Activated naive CD4-positive, alpha-beta T cell treated with anti-CD3 and anti-CD28 coated beads for 36 hours (primary cell): ENCODE measurements at regions of chr20 and their contacts with region 1.

Region 1: DNA sequence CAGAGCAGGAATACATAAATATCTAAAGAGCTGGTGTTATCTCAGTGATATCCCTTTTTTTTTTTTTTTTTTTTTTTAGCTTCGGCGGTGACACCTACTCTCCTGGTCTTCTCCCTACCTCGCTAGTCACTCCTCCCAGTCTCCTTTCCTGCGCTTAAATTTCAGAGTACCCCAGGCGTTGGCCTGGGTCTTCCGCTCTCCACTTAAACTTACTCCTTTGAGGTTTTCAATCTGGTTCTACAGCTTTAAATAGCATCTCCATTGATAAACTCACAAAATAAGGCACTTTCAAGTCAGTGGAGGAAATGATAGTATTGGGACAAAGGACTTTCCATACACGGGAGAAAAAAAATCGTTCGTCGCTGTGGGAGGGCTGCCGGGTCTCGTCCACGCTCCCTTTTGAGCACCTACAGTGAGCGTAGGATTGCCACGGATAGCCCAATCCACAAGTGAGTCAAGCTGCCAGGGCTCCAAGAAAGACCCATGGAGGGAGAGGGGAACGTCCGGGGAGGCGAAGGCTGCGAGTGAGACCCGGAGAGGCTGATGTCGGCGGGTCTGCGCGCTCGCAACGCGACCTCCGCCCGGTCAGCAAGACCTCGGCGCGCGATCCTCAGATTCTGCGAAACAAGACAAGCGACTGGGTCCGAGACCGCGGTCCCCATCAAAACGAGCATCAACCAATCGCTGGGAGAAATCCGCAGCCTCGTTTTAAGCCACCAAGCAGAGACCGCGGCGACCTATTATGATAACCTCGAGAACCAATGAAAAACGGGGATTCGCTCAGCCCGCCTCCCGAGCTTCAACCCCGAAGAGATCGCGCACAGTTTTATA is 672 bp upstream of the SRSF6 start:
- DNase-seq: peak; percentile 92
- H3K4me3 Mint-ChIP-seq: peak overlapping the region; percentile 81
- H3K27ac Mint-ChIP-seq: peak overlapping the region; percentile 95
- H3K4me1 Mint-ChIP-seq: peaks cover 28% of the 10 kb centered on the region
- H3K27me3 Mint-ChIP-seq: peaks cover 5% of the 10 kb centered on the region

Region 2: DNA sequence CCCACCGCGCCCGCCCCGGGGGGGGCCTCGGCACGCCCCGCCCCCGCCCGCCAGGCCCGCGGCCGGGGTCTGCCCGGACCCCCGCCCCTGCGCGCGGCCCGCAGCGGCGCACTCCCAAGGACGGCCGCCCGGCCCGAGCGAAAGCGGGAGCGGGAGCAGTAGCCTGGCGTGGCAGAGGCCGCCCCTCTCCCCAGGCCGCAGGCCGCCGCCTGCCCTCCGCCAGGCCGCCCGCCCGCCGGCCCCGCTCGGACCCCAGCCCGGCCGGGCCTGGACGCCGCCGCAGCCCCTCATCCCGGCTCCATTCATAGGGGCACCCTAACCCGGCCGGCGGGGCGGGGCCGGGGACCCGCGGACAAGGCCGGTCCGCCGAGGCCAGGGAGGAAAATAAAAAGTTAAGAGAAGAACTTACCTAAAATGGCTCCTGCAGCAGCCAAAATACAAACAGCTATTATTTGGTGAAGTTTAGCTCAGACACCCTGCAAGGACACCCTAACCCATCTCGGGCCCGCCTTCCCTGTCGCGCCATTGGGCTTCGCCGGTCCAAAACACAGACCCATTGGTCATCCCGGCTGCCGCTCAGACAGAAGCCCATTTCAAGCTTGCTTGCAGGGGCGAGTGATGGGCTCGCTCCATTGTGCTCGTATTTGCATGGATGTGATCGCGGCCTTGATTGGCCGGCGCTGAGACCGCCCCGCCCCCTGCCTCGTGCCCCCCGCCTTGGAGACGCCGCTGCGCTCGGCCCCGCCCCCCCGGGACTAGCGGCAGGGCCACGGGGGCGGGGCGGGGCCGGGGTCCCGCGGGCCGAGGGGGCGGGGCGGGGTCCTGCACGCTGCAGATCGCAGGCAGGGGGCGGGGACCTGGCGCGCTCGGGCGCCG is 1838.9 kb before region 1 on chr20 and contains the start of gene CHD6:
- CTCF ChIA-PET with region 1: no interaction called
- intact Hi-C with region 1: loop called (anchors 5 kb)
- DNase-seq: peak; percentile 100
- H3K4me3 Mint-ChIP-seq: peak within 1 kb of the TSS; percentile 85
- H3K27ac Mint-ChIP-seq: peak within 1 kb of the TSS; percentile 68
- H3K4me1 Mint-ChIP-seq: peaks cover 39% of the 10 kb centered on the region
- H3K27me3 Mint-ChIP-seq: no peaks in the 10 kb centered on the region
- total RNA-seq, gene CHD6: 30.1 to 31.8 TPM

Region 3: GRCh38 chr20:43492101-43492500 is 35.1 kb after region 1 on chr20:
- CTCF ChIA-PET with region 1: no interaction called
- intact Hi-C with region 1: loop called (anchors 5 kb)
- DNase-seq: no peak
- H3K4me3 Mint-ChIP-seq: no peak overlapping the region
- H3K27ac Mint-ChIP-seq: no peak overlapping the region
- H3K4me1 Mint-ChIP-seq: peaks cover 4% of the 10 kb centered on the region
- H3K27me3 Mint-ChIP-seq: no peaks in the 10 kb centered on the region

Region 4: GRCh38 chr20:43579861-43580793 is 123.1 kb after region 1 on chr20:
- CTCF ChIA-PET with region 1: no interaction called
- intact Hi-C with region 1: no loop called
- DNase-seq: no peak
- H3K4me3 Mint-ChIP-seq: no peak overlapping the region
- H3K27ac Mint-ChIP-seq: no peak overlapping the region
- H3K4me1 Mint-ChIP-seq: no peaks in the 10 kb centered on the region
- H3K27me3 Mint-ChIP-seq: no peaks in the 10 kb centered on the region

Region 5: DNA sequence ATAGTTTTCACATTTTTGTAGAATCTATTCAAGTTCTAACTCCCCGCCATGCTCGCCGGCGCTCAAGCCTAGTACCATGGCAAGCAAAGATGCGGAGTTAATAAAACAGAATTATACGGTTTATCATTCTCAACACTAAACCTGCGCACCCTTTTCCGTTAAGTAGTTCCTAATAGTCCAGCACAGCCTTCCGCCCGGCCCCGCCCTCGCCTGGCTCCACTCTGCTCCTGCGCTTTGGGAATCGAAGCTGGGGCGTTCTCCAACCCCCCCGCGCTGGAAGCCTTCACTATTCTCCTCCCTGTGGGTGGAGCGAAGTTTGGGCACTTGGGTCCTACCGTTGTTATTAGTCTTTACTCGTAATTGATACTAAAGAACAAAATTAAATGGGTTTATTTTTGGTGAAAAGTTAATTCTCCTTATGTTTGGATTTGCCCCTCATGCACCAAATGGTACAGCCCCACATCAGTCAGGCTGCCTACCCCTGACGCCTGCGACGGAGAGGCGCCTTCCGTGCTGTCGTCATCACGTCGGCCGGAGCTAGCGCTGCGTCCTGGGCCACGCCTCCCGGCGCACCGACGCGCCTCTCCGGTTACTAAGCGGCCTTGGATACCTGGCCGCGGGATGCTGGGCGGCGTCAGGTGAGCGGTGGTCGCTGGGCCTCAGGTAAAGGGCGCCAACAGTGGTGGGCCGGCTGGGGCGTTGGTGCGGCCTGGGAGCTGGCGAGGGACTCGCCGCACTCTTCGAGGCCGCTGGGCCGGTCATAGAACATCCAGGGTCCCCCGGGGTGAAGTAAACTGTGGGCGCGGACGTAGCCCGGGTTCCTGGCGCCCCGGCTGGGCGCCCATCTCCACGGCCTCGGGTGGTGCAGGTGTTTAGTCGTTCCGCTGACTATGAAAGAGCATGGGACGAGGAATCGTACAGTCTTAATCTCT is 133.6 kb after region 1 on chr20 and contains the start of gene IFT52:
- CTCF ChIA-PET with region 1: no interaction called
- intact Hi-C with region 1: loop called (anchors 1 kb)
- DNase-seq: peak; percentile 91
- H3K4me3 Mint-ChIP-seq: peak within 1 kb of the TSS; percentile 82
- H3K27ac Mint-ChIP-seq: peak within 1 kb of the TSS; percentile 93
- H3K4me1 Mint-ChIP-seq: peaks cover 13% of the 10 kb centered on the region
- H3K27me3 Mint-ChIP-seq: no peaks in the 10 kb centered on the region
- total RNA-seq, gene IFT52: 14.2 to 15.8 TPM

Region 6: DNA sequence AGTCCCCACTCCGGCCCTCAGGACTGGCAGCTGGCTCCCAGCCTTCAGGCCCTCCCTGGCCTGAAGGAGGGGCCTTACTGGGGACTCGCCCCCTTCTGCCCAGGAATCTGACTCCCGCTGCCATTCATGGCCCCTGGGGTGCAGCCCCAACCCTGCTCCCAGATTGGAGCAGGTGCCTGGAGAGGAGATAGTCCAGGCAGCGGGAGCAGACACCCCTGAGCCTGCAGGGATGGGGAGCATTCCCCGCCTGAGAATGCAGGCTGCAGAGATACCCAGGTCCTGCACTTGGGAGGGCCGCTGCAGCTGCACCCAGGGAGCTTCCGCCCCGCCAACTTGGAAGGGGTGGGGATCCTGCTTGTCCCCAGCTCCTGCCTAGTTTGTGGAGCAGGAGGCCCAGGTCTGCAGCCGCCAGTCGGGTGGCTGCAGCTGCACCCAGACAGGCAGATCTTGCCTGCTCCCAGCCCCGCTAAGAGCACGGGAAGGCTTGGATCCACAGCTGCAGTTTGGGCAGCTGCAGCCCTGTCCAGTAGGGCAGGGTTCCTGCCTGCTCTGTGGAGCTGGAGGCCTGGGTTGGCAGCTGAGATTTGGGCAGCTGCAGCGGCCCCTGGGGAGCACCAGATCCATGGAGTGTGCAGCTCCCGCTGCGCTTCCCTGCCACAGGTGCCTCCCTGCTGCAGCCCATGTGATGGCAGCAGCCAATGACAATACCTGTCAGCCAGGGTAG is 264.6 kb after region 1 on chr20:
- CTCF ChIA-PET with region 1: no interaction called
- intact Hi-C with region 1: loop called (anchors 5 kb)
- DNase-seq: no peak
- H3K4me3 Mint-ChIP-seq: peak overlapping the region; percentile 72
- H3K27ac Mint-ChIP-seq: peak overlapping the region; percentile 60
- H3K4me1 Mint-ChIP-seq: peaks cover 59% of the 10 kb centered on the region
- H3K27me3 Mint-ChIP-seq: no peaks in the 10 kb centered on the region

Region 7: GRCh38 chr20:43955062-43955749 is 498.2 kb after region 1 on chr20:
- CTCF ChIA-PET with region 1: no interaction called
- intact Hi-C with region 1: loop called (anchors 5 kb)
- DNase-seq: peak; percentile 76
- H3K4me3 Mint-ChIP-seq: no peak overlapping the region
- H3K27ac Mint-ChIP-seq: peak overlapping the region; percentile 62
- H3K4me1 Mint-ChIP-seq: peaks cover 72% of the 10 kb centered on the region
- H3K27me3 Mint-ChIP-seq: peaks cover 9% of the 10 kb centered on the region

Region 8: GRCh38 chr20:44885392-44886265 is 1428.6 kb after region 1 on chr20 and contains the start of gene YWHAB:
- CTCF ChIA-PET with region 1: no interaction called
- intact Hi-C with region 1: loop called (anchors 10 kb)
- DNase-seq: peak; percentile 99
- H3K4me3 Mint-ChIP-seq: peak within 1 kb of the TSS; percentile 95
- H3K27ac Mint-ChIP-seq: peak within 1 kb of the TSS; percentile 96
- H3K4me1 Mint-ChIP-seq: peaks cover 59% of the 10 kb centered on the region
- H3K27me3 Mint-ChIP-seq: no peaks in the 10 kb centered on the region
- total RNA-seq, gene YWHAB: 245 to 260 TPM